H1 (cell line): ENCODE measurements at regions of chr6 and their contacts with region 1.

Region 1: DNA sequence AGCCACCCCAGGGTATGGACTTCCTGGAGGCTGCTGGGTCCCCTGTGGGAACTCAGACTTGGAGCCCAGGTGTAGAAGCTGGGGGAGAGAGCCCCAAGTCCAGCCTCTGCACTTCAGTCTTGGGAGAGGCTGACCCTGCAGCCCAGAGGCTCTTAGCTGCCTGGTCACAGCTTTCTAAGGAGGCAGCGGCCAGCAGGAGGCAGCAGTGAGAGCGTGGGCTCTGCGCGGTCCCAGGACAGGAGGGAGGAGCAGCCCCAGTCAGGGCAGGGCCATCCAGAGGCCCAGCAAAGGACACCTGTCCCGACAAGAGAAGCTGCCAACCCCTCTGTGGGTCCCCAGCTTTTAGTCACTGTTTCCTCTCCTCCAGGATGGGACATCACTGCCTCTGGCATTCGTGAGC is 9.4 kb downstream of the TREML2 start:
- DNase-seq: peak in 1 of 2 experiments; percentile 87
- H3K4me3 ChIP-seq: no peak overlapping the region
- H3K27ac ChIP-seq: no peak overlapping the region
- H3K4me1 ChIP-seq: no peaks in the 10 kb centered on the region; a peak in 1 of 7 replicates
- H3K27me3 ChIP-seq: no peaks in the 10 kb centered on the region
- CTCF ChIP-seq: peak; percentile 88 to 92 (median 88)
- EP300 ChIP-seq: no peak
- POLR2A ChIP-seq: no peak
- RAD21 ChIP-seq: peak; percentile 55 to 71

Region 2: GRCh38 chr6:40882323-40882997 is 309.1 kb before region 1 on chr6:
- CTCF ChIA-PET with region 1: no interaction called
- POLR2A ChIA-PET with region 1: no interaction called
- DNase-seq: no peak
- H3K4me3 ChIP-seq: no peak overlapping the region
- H3K27ac ChIP-seq: no peak overlapping the region
- H3K4me1 ChIP-seq: no peaks in the 10 kb centered on the region
- H3K27me3 ChIP-seq: no peaks in the 10 kb centered on the region; a peak in 1 of 7 replicates
- CTCF ChIP-seq: no peak
- EP300 ChIP-seq: no peak
- POLR2A ChIP-seq: no peak
- RAD21 ChIP-seq: no peak

Region 3: GRCh38 chr6:41100871-41101287 is 90.7 kb before region 1 on chr6:
- CTCF ChIA-PET with region 1: interaction called, 24 read pairs
- POLR2A ChIA-PET with region 1: no interaction called
- DNase-seq: peak; percentile 60 to 87
- H3K4me3 ChIP-seq: peak overlapping the region in 1 of 4 experiments; percentile 37; a peak in 2 of 8 replicates
- H3K27ac ChIP-seq: no peak overlapping the region
- H3K4me1 ChIP-seq: peaks cover 0 to 2% (median 0%) of the 10 kb centered on the region in 4 experiments; a peak in 1 of 7 replicates
- H3K27me3 ChIP-seq: peaks cover 0 to 6% (median 3%) of the 10 kb centered on the region in 4 experiments; a peak in 2 of 7 replicates
- CTCF ChIP-seq: peak; percentile 78 to 91 (median 78)
- EP300 ChIP-seq: no peak
- POLR2A ChIP-seq: peak in 1 of 2 experiments; percentile 44; a peak in 1 of 3 replicates
- RAD21 ChIP-seq: peak; percentile 76 to 89

Region 4: DNA sequence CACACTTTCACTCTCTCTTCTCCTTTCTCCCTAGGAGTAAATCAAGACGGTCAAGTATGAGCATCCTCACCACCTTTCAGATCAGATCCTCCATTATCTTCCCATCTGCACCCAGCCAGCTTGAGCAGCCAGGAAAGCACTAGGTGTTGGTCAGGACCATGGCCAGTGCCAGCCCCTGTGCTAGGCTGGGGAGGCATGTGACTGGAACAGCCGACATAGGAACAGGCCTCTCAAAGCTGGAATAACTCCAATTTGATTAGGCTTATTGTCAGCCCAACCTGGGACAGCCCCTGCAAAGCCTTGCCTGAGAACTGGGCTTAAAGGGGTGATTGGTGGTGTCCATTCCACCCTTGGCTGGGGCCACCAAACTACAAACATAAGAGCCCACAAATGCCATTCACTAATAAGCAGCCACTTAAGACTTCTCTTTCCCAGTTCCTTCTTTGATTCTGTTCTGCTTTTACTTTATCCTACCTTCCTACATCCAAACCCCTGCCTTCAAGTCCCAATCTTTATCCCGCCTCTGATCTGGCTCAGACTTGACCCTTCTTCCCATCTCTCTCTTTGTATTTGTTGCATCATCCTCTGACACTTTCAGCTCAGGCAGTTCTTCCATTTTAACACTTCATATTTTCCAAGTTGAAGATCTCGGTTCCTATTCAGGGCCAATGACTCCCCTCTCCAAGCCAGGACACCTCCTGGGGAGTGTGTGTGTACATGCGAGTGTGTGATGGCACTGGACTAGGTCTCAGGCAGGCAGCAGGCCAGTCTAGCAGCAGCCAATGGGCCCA is 24.2 kb before region 1 on chr6:
- CTCF ChIA-PET with region 1: interaction called, 19 read pairs
- POLR2A ChIA-PET with region 1: no interaction called
- DNase-seq: peak in 1 of 2 experiments; percentile 72
- H3K4me3 ChIP-seq: no peak overlapping the region
- H3K27ac ChIP-seq: no peak overlapping the region
- H3K4me1 ChIP-seq: peaks cover 0 to 12% (median 8%) of the 10 kb centered on the region in 4 experiments; a peak in 5 of 7 replicates
- H3K27me3 ChIP-seq: no peaks in the 10 kb centered on the region
- CTCF ChIP-seq: no peak
- EP300 ChIP-seq: peak in 1 of 2 experiments; percentile 67; a peak in 1 of 3 replicates
- POLR2A ChIP-seq: no peak
- RAD21 ChIP-seq: no peak

Region 5: DNA sequence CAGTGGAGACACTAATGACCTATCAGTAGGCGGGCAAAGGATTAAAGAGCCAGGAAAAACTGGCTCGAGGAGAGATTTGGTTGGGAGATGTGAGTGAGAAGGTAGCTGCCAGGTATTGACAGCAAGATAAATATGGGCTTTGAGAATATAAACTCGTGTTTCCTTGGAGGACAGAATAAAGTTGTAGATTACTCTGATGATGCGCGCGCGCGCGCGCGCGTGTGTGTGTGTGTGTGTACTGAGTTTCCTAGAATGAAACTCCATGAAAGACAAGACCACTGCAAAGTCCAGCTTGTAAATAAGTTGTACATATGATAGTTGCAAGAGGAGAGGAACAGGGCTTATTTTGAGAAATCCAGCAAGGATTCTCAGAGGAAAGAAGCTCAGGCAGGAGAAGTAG is 15.4 kb before region 1 on chr6:
- CTCF ChIA-PET with region 1: interaction called, 51 read pairs
- POLR2A ChIA-PET with region 1: interaction called, 5 read pairs
- DNase-seq: no peak
- H3K4me3 ChIP-seq: no peak overlapping the region
- H3K27ac ChIP-seq: no peak overlapping the region
- H3K4me1 ChIP-seq: peaks cover 0 to 7% (median 4%) of the 10 kb centered on the region in 4 experiments; a peak in 4 of 7 replicates
- H3K27me3 ChIP-seq: no peaks in the 10 kb centered on the region
- CTCF ChIP-seq: no peak
- EP300 ChIP-seq: no peak
- POLR2A ChIP-seq: no peak
- RAD21 ChIP-seq: no peak

Region 6: GRCh38 chr6:41214559-41215238 is 23.1 kb after region 1 on chr6:
- CTCF ChIA-PET with region 1: interaction called, 13 read pairs
- POLR2A ChIA-PET with region 1: no interaction called
- DNase-seq: peak in 1 of 2 experiments; percentile 49
- H3K4me3 ChIP-seq: no peak overlapping the region
- H3K27ac ChIP-seq: no peak overlapping the region
- H3K4me1 ChIP-seq: no peaks in the 10 kb centered on the region
- H3K27me3 ChIP-seq: no peaks in the 10 kb centered on the region
- CTCF ChIP-seq: peak; percentile 38 to 45 (median 44); a peak in 3 of 4 replicates
- EP300 ChIP-seq: no peak
- POLR2A ChIP-seq: no peak
- RAD21 ChIP-seq: peak in 1 of 2 experiments; percentile 25; a peak in 1 of 4 replicates

Region 7: GRCh38 chr6:41269166-41269565 is 77.6 kb after region 1 on chr6:
- CTCF ChIA-PET with region 1: interaction called, 10 read pairs
- POLR2A ChIA-PET with region 1: no interaction called
- DNase-seq: no peak
- H3K4me3 ChIP-seq: no peak overlapping the region
- H3K27ac ChIP-seq: no peak overlapping the region
- H3K4me1 ChIP-seq: no peaks in the 10 kb centered on the region
- H3K27me3 ChIP-seq: no peaks in the 10 kb centered on the region; a peak in 2 of 7 replicates
- CTCF ChIP-seq: no peak
- EP300 ChIP-seq: no peak
- POLR2A ChIP-seq: no peak
- RAD21 ChIP-seq: no peak

Region 8: GRCh38 chr6:41278699-41279405 is 87.3 kb after region 1 on chr6:
- CTCF ChIA-PET with region 1: interaction called, 10 read pairs
- POLR2A ChIA-PET with region 1: no interaction called
- DNase-seq: peak; percentile 72 to 78
- H3K4me3 ChIP-seq: no peak overlapping the region
- H3K27ac ChIP-seq: no peak overlapping the region
- H3K4me1 ChIP-seq: peaks cover 0 to 3% (median 0%) of the 10 kb centered on the region in 4 experiments; a peak in 2 of 7 replicates
- H3K27me3 ChIP-seq: no peaks in the 10 kb centered on the region
- CTCF ChIP-seq: peak; percentile 65 to 94 (median 65)
- EP300 ChIP-seq: no peak
- POLR2A ChIP-seq: no peak
- RAD21 ChIP-seq: peak; percentile 60 to 74

Region 9: GRCh38 chr6:41356790-41357189 is 165.2 kb after region 1 on chr6:
- CTCF ChIA-PET with region 1: no interaction called
- POLR2A ChIA-PET with region 1: no interaction called
- DNase-seq: peak in 1 of 2 experiments; percentile 30
- H3K4me3 ChIP-seq: no peak overlapping the region
- H3K27ac ChIP-seq: no peak overlapping the region
- H3K4me1 ChIP-seq: no peaks in the 10 kb centered on the region; a peak in 2 of 7 replicates
- H3K27me3 ChIP-seq: no peaks in the 10 kb centered on the region; a peak in 1 of 7 replicates
- CTCF ChIP-seq: peak in 1 of 3 experiments; percentile 7; a peak in 1 of 4 replicates
- EP300 ChIP-seq: no peak
- POLR2A ChIP-seq: no peak
- RAD21 ChIP-seq: no peak